ENCODE measurements at regions of chr7 and their contacts with region 1.

Region 1: DNA sequence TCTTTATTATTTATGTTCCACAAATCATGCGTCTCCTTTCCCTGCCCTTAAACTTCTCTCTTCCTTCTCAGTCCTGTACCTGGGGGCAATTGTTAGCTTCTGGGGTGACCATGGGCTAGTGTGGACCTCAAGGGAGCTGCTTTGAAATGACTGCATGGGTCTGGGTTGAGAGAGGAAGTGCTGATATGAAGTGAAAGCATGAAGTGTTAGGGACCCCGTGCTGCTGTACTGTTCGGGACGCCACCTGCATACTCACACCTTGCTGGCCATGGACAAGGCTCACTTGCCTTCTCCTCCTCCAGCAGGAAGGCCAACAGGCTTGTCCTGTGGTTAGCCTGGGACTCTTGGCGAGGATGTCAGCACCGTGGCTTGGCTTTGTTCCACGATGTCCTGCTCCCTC is 56.7 kb downstream of the MTPN start:
- DNase-seq: no peak
- H3K4me3 ChIP-seq: no peak overlapping the region
- H3K27ac ChIP-seq: no peak overlapping the region
- H3K4me1 ChIP-seq: peaks cover 23% of the 10 kb centered on the region
- H3K27me3 ChIP-seq: no peaks in the 10 kb centered on the region
- CTCF ChIP-seq: no peak

Region 2: GRCh38 chr7:135877805-135878204 is 42.7 kb before region 1 on chr7:
- CTCF ChIA-PET with region 1: no interaction called
- dilution Hi-C with region 1: no loop called
- in situ Hi-C with region 1: no loop called
- intact Hi-C with region 1: loop called (anchors 5 kb)
- DNase-seq: peak; percentile 94
- H3K4me3 ChIP-seq: no peak overlapping the region
- H3K27ac ChIP-seq: no peak overlapping the region
- H3K4me1 ChIP-seq: peaks cover 20% of the 10 kb centered on the region
- H3K27me3 ChIP-seq: no peaks in the 10 kb centered on the region
- CTCF ChIP-seq: no peak

Region 3: DNA sequence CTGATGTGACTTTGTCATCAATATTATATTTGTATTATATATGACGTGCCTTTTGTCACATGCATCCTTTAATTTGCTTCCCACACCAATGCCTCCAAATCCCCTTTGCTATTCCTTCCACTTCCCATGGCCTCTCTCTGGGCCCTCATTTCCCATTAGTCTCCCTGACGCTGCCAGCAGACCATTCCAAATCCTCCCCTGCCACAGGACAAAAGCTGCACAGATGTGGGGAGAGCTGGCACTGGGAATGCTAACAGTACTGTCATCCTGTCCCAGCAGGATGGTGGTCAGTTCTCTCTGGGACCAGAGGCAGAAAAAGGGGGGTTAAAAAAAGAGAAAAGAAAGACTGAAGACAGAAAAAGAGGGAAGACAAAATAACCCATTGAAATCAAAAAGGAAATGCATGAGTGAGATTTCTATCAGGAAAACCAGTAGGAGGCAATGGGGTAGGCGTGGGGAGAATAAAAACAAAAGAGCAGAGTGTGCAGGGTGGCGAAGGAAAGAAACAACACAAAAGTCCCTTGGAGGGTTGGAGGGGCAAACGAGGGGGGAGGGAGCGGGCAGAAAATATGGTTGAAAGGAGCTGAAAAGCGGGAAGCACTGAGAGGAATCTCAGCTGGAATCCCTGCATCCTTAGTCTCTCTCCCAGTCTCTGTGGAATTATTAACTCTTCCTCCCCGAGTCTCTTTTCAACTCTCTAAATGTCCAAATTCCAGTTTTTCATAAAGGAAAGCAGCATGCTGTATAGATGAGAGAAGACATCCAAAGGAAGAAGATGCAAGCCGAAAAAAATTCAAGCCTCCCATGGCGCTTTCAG is 1482.3 kb after region 1 on chr7:
- CTCF ChIA-PET with region 1: interaction called, 27 read pairs
- dilution Hi-C with region 1: no loop called
- in situ Hi-C with region 1: no loop called
- intact Hi-C with region 1: no loop called
- DNase-seq: no peak
- H3K4me3 ChIP-seq: no peak overlapping the region
- H3K27ac ChIP-seq: no peak overlapping the region
- H3K4me1 ChIP-seq: no peaks in the 10 kb centered on the region
- H3K27me3 ChIP-seq: no peaks in the 10 kb centered on the region
- CTCF ChIP-seq: no peak